ENCODE measurements at regions of chr4 and their contacts with region 1.

Region 1: GRCh38 chr4:95614684-95615205 is 66.0 kb upstream of the UNC5C start:
- DNase-seq: no peak
- H3K4me3 ChIP-seq: no peak overlapping the region
- H3K27ac ChIP-seq: no peak overlapping the region
- H3K4me1 ChIP-seq: no peaks in the 10 kb centered on the region
- H3K27me3 ChIP-seq: no peaks in the 10 kb centered on the region
- CTCF ChIP-seq: no peak
- POLR2A ChIP-seq: no peak

Region 2: GRCh38 chr4:95963456-95963855 is 348.7 kb after region 1 on chr4:
- intact Hi-C with region 1: loop called (anchors 5 kb)
- DNase-seq: no peak
- H3K4me3 ChIP-seq: no peak overlapping the region
- H3K27ac ChIP-seq: no peak overlapping the region
- H3K4me1 ChIP-seq: no peaks in the 10 kb centered on the region
- H3K27me3 ChIP-seq: no peaks in the 10 kb centered on the region
- CTCF ChIP-seq: no peak
- POLR2A ChIP-seq: no peak